Caco-2 (cell line): ENCODE measurements at regions of chr17 and their contacts with region 1.

Region 1: DNA sequence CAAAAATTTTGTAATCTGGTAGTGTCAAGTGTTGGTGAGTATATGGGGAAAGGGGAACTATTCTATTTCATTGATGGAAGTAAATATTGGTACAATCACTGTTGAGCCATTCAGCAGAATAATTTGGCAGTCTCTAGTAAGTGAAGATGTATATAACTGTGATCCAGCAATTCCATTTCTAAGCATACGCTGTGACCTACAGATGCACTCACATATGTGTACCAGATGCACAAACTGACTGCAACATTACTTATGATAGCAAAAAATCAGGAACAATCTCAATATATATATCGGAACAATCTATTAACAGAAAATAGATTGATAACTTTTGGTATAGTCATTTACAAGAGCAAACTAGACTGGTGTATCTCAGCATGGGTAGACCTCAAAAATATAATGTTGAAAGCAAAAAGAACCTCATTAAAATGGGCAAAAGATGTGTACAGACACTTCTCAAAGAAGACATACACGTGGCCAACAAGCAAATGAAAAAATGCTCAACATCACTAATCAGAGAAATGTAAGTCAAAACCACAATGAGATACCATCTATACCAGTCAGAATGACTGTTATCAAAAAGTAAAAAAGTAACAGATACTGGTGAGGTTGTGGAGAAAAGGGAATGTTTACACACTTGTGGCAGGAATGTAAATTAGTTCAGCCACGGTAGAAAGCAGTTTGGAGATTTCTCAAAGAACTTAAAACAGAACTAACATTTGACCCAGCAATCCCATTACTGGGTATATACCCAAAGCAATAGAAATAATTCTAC is 20.7 kb downstream of the ADAP2 start:
- DNase-seq: no peak
- H3K4me3 ChIP-seq: no peak overlapping the region
- H3K4me3 Mint-ChIP-seq: no peak overlapping the region
- H3K27ac Mint-ChIP-seq: no peak overlapping the region
- H3K4me1 ChIP-seq: peaks cover 16% of the 10 kb centered on the region
- H3K4me1 Mint-ChIP-seq: peaks cover 8% of the 10 kb centered on the region
- H3K27me3 ChIP-seq: no peaks in the 10 kb centered on the region
- H3K27me3 Mint-ChIP-seq: no peaks in the 10 kb centered on the region
- CTCF ChIP-seq: peak in 1 of 2 experiments; percentile 19

Region 2: DNA sequence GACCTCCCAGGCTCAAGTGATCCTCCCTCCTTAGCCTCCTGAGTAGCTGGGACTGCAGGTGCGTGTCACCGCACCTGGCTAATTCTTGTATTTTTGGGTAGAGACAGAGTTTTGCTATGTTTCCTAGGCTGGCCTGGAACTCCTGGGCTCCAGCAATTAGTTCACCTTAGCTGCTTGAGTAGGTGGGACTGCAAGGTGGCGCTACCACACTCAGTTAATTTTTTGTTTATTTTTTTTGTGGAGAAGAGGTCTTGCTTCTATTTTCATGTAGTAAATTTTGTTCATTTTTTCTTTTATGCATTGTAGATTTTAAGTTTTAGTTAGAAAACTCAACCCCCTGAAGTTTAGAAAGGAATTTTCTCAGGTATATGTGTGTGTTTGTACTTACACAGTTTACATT is 50.1 kb after region 1 on chr17:
- CTCF ChIA-PET with region 1: no interaction called
- POLR2A ChIA-PET with region 1: no interaction called
- intact Hi-C with region 1: loop called (anchors 10 kb)
- DNase-seq: no peak
- H3K4me3 ChIP-seq: no peak overlapping the region
- H3K4me3 Mint-ChIP-seq: no peak overlapping the region
- H3K27ac Mint-ChIP-seq: no peak overlapping the region
- H3K4me1 ChIP-seq: peaks cover 10% of the 10 kb centered on the region
- H3K4me1 Mint-ChIP-seq: peaks cover 7% of the 10 kb centered on the region
- H3K27me3 ChIP-seq: no peaks in the 10 kb centered on the region
- H3K27me3 Mint-ChIP-seq: no peaks in the 10 kb centered on the region
- CTCF ChIP-seq: no peak